CD4-positive, alpha-beta memory T cell (primary cell): ENCODE measurements at regions of chr17 and their contacts with region 1.

Region 1: GRCh38 chr17:36629252-36629847 is 28.0 kb downstream of the MRM1 start:
- DNase-seq: peak; percentile 66 to 77 (median 70)
- H3K4me3 ChIP-seq: no peak overlapping the region
- H3K4me3 Mint-ChIP-seq: no peak overlapping the region
- H3K27ac ChIP-seq: no peak overlapping the region
- H3K27ac Mint-ChIP-seq: no peak overlapping the region
- H3K4me1 ChIP-seq: no peaks in the 10 kb centered on the region
- H3K4me1 Mint-ChIP-seq: peaks cover 0 to 4% (median 1%) of the 10 kb centered on the region in 4 donors
- H3K27me3 ChIP-seq: no peaks in the 10 kb centered on the region
- H3K27me3 Mint-ChIP-seq: peaks cover 5 to 9% of the 10 kb centered on the region in 2 donors

Region 2: GRCh38 chr17:36705874-36706731 is 76.8 kb after region 1 on chr17:
- CTCF ChIA-PET with region 1: interaction called, 24 read pairs
- POLR2A ChIA-PET with region 1: no interaction called
- intact Hi-C with region 1: no loop called
- DNase-seq: peak; percentile 36 to 52 (median 47)
- H3K4me3 ChIP-seq: no peak overlapping the region
- H3K4me3 Mint-ChIP-seq: no peak overlapping the region
- H3K27ac ChIP-seq: no peak overlapping the region
- H3K27ac Mint-ChIP-seq: peak overlapping the region in 1 of 7 donors; percentile 11
- H3K4me1 ChIP-seq: no peaks in the 10 kb centered on the region
- H3K4me1 Mint-ChIP-seq: peaks cover 0 to 8% (median 0%) of the 10 kb centered on the region in 4 donors
- H3K27me3 ChIP-seq: peaks cover 6% of the 10 kb centered on the region
- H3K27me3 Mint-ChIP-seq: peaks cover 22 to 30% of the 10 kb centered on the region in 2 donors

Region 3: DNA sequence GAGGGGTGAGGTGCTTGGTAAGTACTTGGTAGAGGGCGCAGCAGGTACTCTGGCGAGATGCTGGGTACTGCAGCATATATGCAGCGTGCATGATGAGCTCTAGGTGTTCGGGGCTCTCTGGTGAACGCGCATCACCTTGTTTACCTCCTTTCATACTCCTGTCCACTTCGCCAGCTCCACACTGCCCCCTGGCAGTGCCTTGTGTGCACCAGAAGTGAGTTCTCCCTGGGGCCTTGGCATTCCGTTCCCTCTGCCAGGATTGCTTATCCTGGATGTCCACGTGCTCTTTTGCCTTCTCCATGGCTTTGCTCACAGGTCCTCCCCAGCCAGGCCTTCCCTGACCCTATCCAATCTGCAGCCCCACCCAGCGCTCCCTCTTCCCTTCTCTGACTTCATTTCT is 126.2 kb after region 1 on chr17:
- CTCF ChIA-PET with region 1: interaction called, 27 read pairs
- POLR2A ChIA-PET with region 1: no interaction called
- intact Hi-C with region 1: no loop called
- DNase-seq: peak in 4 of 5 donors; percentile 28 to 34 (median 30)
- H3K4me3 ChIP-seq: no peak overlapping the region
- H3K4me3 Mint-ChIP-seq: no peak overlapping the region
- H3K27ac ChIP-seq: no peak overlapping the region
- H3K27ac Mint-ChIP-seq: no peak overlapping the region
- H3K4me1 ChIP-seq: no peaks in the 10 kb centered on the region
- H3K4me1 Mint-ChIP-seq: peaks cover 2 to 7% (median 6%) of the 10 kb centered on the region in 4 donors
- H3K27me3 ChIP-seq: no peaks in the 10 kb centered on the region
- H3K27me3 Mint-ChIP-seq: no peaks in the 10 kb centered on the region

Region 4: DNA sequence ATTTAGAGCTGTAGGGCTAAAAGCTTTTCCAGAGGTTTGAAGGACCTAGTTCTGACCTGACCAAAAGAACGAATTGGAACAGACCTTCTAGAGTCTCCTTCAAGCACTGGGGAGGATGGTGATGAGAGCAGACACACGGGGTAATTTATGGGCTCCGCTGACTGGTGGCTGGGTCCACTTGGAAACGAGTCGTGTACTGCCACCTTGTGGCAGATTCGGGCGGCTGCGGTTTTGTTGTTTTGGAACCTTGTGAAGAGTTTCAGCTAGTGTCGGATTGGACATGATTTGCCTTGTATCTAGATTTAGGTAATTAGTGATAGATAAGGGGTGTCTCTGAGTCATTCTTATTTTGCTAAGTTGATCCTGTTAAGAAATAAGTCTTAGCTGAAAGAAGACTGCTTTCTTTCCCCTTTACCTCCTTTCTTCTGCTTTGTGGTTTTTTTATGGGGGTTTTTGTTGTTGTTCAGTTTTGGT is 418.3 kb after region 1 on chr17:
- CTCF ChIA-PET with region 1: interaction called, 44 read pairs
- POLR2A ChIA-PET with region 1: no interaction called
- intact Hi-C with region 1: no loop called
- DNase-seq: peak; percentile 62 to 72 (median 70)
- H3K4me3 ChIP-seq: no peak overlapping the region
- H3K4me3 Mint-ChIP-seq: no peak overlapping the region
- H3K27ac ChIP-seq: no peak overlapping the region
- H3K27ac Mint-ChIP-seq: peak overlapping the region in 6 of 7 donors; percentile 62 to 77 (median 71)
- H3K4me1 ChIP-seq: no peaks in the 10 kb centered on the region
- H3K4me1 Mint-ChIP-seq: peaks cover 9 to 13% (median 10%) of the 10 kb centered on the region in 4 donors
- H3K27me3 ChIP-seq: no peaks in the 10 kb centered on the region
- H3K27me3 Mint-ChIP-seq: no peaks in the 10 kb centered on the region

Region 5: DNA sequence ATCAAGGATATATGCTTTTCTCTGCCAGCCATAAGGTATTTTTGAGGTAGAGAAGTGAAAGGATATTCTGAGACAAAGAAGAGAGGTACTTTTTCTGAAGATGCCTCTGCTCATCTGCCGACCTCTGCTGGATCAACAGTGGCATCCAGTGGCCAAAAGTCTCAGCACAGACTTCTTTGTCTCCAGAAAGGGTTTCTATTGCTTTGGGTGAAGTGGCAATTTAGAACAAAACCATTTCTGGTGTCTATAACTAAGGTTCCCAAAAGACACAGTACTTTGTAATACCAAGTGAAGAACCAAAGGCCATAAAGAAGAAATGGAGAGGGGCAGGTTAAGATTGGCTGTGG is 591.2 kb after region 1 on chr17:
- CTCF ChIA-PET with region 1: no interaction called
- POLR2A ChIA-PET with region 1: no interaction called
- intact Hi-C with region 1: loop called (anchors 1 kb)
- DNase-seq: peak in 4 of 5 donors; percentile 6 to 24 (median 18)
- H3K4me3 ChIP-seq: no peak overlapping the region
- H3K4me3 Mint-ChIP-seq: no peak overlapping the region
- H3K27ac ChIP-seq: no peak overlapping the region
- H3K27ac Mint-ChIP-seq: peak overlapping the region in 2 of 7 donors; percentile 14 to 38
- H3K4me1 ChIP-seq: no peaks in the 10 kb centered on the region
- H3K4me1 Mint-ChIP-seq: no peaks in the 10 kb centered on the region
- H3K27me3 ChIP-seq: no peaks in the 10 kb centered on the region
- H3K27me3 Mint-ChIP-seq: no peaks in the 10 kb centered on the region

Region 6: DNA sequence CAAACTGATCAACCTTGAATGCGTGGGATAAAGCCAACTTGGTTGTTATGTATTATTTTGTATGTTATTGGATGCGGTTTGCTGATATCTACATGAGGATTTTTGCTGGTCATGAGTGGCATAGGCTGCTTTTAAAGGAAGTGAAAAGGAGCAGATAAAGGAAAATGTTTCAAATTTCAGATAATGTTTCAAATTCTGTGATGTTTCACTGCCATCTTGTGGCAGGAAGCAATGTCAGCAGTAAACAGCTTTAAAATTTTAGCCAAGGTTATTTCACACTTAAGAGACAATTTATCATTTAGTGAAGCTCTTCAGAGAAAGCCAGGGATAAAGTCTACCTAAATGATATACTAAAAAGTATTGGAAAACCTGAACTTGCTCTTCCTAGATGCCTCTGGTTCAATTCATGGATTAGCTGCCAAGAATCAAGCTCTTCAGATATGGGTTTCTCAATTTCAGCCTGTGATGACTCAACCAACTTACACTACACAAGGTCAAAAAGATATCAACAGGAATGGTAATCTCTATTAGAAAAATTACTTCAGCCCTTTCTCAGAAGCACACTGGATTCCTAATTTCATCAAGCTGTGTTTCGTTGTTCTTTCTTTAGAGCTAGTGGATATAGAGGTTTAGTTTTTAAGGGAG is 610.5 kb after region 1 on chr17:
- CTCF ChIA-PET with region 1: interaction called, 14 read pairs
- POLR2A ChIA-PET with region 1: no interaction called
- intact Hi-C with region 1: loop called (anchors 1 kb)
- DNase-seq: peak in 3 of 5 donors; percentile 3 to 10 (median 6)
- H3K4me3 ChIP-seq: no peak overlapping the region
- H3K4me3 Mint-ChIP-seq: no peak overlapping the region
- H3K27ac ChIP-seq: no peak overlapping the region
- H3K27ac Mint-ChIP-seq: peak overlapping the region in 1 of 7 donors; percentile 55
- H3K4me1 ChIP-seq: no peaks in the 10 kb centered on the region
- H3K4me1 Mint-ChIP-seq: no peaks in the 10 kb centered on the region
- H3K27me3 ChIP-seq: no peaks in the 10 kb centered on the region
- H3K27me3 Mint-ChIP-seq: no peaks in the 10 kb centered on the region

Region 7: GRCh38 chr17:37373530-37374159 is 744.3 kb after region 1 on chr17:
- CTCF ChIA-PET with region 1: no interaction called
- POLR2A ChIA-PET with region 1: no interaction called
- intact Hi-C with region 1: loop called (anchors 2 kb)
- DNase-seq: peak; percentile 57 to 68 (median 65)
- H3K4me3 ChIP-seq: no peak overlapping the region
- H3K4me3 Mint-ChIP-seq: no peak overlapping the region
- H3K27ac ChIP-seq: no peak overlapping the region
- H3K27ac Mint-ChIP-seq: no peak overlapping the region
- H3K4me1 ChIP-seq: no peaks in the 10 kb centered on the region
- H3K4me1 Mint-ChIP-seq: peaks cover 0 to 3% (median 1%) of the 10 kb centered on the region in 4 donors
- H3K27me3 ChIP-seq: no peaks in the 10 kb centered on the region
- H3K27me3 Mint-ChIP-seq: no peaks in the 10 kb centered on the region